HEK293T (cell line): ENCODE measurements at regions of chr17 and their contacts with region 1.

Region 1: DNA sequence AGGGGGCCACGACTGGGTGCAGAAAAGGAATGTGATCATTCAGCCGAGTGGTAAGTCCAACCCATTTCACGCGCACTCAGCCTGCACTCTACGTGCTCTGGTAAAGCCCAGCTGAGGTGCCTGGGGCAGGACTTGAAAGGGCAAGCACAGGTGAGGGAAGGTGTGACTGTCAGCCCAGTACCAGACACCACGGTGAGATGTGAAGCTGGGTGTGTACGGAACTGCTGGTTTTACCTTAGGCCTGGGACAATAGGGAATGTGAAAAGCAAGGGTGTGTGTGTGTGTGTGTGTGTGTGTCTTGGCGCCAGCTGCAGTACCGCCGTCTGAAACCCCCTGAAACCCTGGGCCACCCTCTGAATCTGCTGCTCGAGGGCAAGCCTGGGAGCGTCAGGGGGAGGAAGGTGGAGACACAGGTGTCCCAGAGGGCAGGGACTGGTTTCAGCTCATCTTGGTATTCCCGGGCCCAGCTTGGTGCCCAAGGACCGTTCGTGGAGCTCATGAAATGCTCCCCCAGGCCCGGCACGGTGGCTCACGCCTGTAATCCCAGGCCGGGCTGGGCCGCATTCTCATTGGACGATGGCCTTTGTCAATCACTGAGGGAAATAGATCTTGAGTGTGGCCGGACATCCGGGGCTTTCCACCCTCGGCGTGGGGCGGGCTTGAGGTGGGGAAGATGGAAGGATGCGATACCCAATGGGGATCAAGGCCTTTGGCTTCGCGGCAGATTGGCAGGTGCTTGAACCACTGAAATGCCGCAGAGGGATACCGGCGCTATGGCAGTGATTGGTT is 27.8 kb upstream of the ST6GALNAC1 start:
- DNase-seq: peak; percentile 99

Region 2: GRCh38 chr17:76383546-76384221 is 287.6 kb before region 1 on chr17:
- CTCF ChIA-PET with region 1: no interaction called
- POLR2A ChIA-PET with region 1: no interaction called
- DNase-seq: peak; percentile 64

Region 3: DNA sequence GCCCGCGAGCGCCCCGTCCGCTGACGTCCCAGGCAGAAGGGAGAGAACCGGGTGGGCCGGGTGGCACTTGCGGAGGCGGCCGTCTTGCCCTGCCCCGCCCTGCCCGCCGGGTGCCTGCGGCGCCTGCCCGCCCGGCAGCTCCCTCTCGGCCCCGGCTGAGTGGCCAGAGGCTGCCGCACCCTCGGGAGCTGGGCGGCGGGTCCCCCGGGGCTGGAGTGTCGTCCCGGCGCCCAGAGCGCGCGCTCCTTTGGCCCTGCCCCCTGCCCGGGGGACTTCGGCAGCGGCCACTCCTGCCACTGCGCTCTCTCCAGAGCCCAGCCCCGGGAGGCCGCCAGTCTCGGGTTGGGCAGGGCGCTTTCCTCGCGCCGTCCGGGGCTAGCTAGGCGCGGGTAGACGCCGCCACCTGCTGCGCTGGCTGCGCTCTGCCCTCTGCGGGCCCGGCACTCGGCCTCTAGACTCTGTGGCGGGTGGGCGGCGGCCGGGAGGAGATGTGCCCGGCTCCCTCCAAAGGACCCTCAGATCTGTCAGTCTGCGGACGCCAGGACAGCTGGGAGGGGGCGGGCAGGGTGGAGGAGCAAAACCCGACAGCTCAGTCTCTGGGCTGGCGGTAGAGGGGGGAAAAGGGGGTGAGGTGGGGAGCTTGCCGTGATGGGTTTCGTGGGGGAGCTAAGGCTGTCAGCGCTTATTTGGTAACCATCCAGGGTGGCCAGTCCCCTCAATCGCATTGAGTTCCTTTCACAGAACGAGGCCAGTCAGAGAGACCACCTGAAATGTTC is 85.3 kb before region 1 on chr17 and contains the start of gene ST6GALNAC2:
- CTCF ChIA-PET with region 1: no interaction called
- POLR2A ChIA-PET with region 1: interaction called, 13 read pairs
- DNase-seq: peak; percentile 66

Region 4: DNA sequence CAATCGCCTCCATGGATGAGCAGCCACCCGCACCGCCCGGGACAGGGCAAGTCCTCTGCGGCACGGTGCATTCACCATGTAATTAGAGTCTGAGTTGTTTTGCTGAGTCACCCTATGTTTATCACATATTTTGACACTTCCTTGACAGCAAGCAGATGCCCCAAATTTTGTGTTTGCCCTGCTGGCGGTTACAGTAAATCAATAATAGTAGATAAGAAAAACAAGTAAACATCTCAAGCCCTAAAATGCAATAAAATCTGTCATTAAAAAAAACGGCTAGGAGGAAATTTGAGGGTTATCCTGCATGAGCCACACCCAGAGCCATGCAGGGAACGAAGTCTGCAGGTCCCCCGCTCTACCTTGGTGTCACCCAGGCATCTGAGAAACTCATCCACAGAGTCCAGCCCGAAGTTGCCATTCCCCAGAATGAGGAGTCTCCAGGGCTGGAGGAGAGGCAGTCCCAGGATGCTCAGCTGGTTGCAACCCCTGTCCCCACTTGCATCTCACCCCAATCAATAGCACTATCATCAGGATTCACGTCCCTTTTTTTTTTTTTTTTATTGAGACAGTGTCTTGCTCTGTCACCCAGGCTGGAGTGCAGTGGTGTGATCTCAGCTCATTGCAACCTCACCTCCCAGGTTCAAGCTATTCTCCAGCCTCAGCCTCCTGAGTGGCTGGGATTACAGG is 11.2 kb before region 1 on chr17:
- CTCF ChIA-PET with region 1: no interaction called
- POLR2A ChIA-PET with region 1: interaction called, 35 read pairs
- DNase-seq: no peak

Region 5: GRCh38 chr17:76687308-76688164 is 16.2 kb after region 1 on chr17:
- CTCF ChIA-PET with region 1: interaction called, 3 read pairs
- POLR2A ChIA-PET with region 1: interaction called, 32 read pairs
- DNase-seq: no peak

Region 6: GRCh38 chr17:76726231-76726775 is 55.0 kb after region 1 on chr17 and contains the start of gene JMJD6:
- CTCF ChIA-PET with region 1: no interaction called
- POLR2A ChIA-PET with region 1: interaction called, 15 read pairs
- DNase-seq: peak; percentile 89

Region 7: GRCh38 chr17:76935331-76935730 is 264.0 kb after region 1 on chr17:
- CTCF ChIA-PET with region 1: no interaction called
- POLR2A ChIA-PET with region 1: no interaction called
- DNase-seq: no peak

Region 8: DNA sequence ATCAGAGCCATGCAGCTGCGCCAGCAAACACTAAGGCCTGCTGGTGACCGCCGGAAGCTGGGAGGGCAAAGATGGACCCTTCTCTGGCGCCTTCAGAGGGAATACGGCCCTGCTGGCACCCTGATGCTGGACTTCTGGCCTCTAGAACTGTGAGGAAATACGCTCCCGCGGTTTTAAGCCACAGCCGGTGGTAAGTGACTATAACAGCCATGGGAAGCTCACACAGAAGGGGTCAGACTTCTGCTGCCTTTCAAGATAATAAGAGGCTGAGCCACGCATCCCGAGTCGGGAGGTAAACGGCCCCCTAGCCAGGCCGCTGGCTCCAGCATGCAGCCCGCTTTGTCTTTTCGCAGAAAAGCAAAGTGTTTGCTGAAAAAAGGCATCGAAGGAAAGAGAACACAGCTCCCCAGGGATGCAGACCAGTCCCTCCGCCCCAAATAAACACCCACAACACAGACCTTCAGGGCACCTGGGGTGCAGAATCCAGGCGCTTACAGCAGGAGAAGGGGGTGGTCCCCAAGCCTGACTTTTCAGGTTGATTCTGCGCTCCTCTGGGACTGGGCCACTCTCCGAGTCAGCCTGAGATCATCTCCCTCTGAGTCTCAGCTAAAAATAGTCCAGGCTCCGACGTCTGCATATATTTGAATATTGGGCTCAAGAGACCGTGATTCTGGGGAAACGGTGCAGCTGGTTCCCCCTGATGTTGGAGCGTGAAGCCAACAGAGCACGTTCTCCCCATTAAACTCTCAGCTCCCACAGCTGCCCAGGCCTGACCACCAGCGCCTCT is 286.6 kb after region 1 on chr17:
- CTCF ChIA-PET with region 1: no interaction called
- POLR2A ChIA-PET with region 1: no interaction called
- DNase-seq: no peak

Region 9: DNA sequence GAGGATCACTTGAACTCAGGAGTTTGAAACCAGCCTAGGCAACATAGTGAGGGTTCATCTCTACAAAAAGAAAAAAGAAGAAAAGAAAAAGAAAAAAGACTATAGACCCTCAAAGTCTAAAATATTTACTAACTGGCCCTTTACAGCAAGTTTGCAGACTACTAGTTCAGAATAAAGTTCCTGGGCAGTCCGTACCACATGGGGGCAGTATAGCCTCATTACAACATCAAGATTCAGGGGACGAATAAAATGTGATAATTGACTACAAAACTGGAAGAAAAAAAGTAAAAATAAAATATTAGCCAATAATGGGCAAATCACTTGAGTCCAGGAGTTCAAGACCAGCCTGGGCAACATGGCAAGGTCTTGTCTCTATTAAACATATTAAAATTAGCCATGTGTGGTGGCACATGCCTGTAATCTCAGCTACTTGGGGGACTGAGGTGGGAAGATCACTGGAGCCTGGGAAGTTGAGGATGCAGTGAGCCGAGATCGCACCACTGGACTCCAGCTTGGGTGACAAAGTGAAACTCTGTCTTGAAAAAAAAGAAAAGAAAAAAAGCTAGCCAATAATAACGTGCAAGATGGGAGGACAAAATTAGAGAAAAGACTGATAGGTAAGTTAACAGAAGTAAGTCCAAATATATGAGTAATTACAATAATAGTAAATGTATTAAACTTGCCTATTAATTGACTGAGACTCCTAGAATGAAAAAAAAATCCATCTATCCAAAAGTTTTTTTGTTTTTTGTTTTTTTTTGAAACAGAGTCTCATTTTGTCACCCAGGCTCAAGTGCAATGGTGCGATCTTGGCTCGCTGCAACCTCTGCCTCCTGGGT is 340.1 kb after region 1 on chr17:
- CTCF ChIA-PET with region 1: no interaction called
- POLR2A ChIA-PET with region 1: no interaction called
- DNase-seq: no peak